Upper lobe of right lung (tissue), 1 donor: ENCODE measurements at regions of chrX and their contacts with region 1.

Region 1: DNA sequence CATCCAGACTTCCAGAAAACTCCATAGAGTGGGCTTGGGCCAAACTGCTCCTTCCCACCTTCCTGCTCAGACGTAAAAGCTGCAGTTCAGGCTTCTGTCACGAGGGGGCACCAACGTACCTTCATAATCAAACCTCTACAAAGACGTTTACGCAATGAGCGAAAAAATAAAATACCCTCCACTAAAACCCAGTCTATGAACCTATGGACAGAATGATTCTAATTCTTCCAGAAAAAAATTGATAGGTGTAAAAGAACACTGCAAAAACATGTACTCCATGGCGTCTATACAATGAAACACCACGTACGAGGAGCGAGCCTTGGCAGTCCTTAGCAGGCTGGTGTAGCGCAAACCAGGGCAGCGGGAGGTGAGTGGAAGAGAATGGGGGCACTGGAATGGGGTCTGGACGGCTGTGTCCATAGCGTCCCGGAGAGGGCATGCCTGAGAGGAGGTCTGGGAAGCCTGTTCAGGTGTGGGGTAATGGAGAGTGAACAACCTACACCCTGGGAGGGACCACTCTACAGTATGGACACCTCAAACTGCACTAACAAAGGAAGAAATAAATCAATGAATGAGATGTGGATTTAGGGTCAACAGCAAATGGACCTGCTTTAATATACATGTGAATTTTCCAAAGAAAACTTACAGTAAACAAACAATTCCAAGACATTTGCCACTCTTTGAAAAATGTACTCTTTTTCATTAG is 14.4 kb upstream of the RAB40A start:
- DNase-seq: peak; percentile 71
- ATAC-seq: peak; percentile 86
- H3K4me3 ChIP-seq: peak overlapping the region; percentile 36
- H3K27ac ChIP-seq: no peak overlapping the region
- H3K4me1 ChIP-seq: no peaks in the 10 kb centered on the region
- H3K27me3 ChIP-seq: no peaks in the 10 kb centered on the region
- CTCF ChIP-seq: peak; percentile 71

Region 2: GRCh38 chrX:103817502-103817901 is 283.8 kb after region 1 on chrX:
- intact Hi-C with region 1: loop called (anchors 10 kb)
- DNase-seq: no peak
- ATAC-seq: peak; percentile 48
- H3K4me3 ChIP-seq: no peak overlapping the region
- H3K27ac ChIP-seq: no peak overlapping the region
- H3K4me1 ChIP-seq: no peaks in the 10 kb centered on the region
- H3K27me3 ChIP-seq: no peaks in the 10 kb centered on the region
- CTCF ChIP-seq: peak; percentile 70